ENCODE measurements at regions of chr7 and their contacts with region 1.

Region 1: DNA sequence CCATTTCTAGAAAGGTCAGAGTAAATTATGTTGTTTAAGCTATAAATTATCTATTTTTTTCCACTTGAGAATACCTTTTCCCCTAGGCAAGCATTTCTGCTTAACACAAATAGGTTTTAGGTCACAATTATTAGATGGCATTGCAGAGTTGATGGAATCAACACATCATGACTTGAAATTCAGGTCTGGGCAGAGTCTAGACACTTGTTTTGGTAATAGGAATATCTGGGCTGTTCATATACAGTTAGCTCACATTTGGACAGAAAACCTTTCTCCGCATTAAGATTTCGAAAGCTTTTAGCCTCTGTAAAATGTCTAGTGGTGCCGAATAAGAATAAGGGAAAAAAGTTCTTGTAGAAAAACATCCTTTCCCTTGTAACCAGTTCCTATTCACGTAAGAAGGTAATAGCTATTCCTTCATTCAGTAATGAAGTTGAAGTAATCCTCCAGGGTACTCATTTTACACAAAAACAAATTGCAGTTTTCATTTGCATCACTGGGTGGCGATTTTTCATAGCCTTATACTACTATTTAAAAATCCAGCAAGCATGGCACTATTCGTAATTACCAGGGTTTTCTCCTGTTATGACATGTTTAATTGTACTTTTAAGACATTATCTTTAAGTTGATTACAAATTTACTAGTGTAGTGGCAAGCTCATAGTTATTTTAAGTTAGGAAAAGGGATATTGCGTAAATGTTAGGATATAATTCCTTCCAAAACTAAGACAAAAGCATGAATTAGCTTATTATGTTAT is 37.0 kb downstream of the RPA3 start:
- DNase-seq: peak; percentile 12
- H3K4me3 ChIP-seq: no peak overlapping the region
- H3K27me3 ChIP-seq: no peaks in the 10 kb centered on the region
- CTCF ChIP-seq: peak; percentile 60

Region 2: GRCh38 chr7:7668706-7669105 is 12.7 kb before region 1 on chr7:
- CTCF ChIA-PET with region 1: no interaction called
- POLR2A ChIA-PET with region 1: no interaction called
- DNase-seq: no peak
- H3K4me3 ChIP-seq: no peak overlapping the region
- H3K27me3 ChIP-seq: no peaks in the 10 kb centered on the region
- CTCF ChIP-seq: no peak

Region 3: GRCh38 chr7:7696458-7697119 is 15.2 kb after region 1 on chr7:
- CTCF ChIA-PET with region 1: interaction called, 14 read pairs
- POLR2A ChIA-PET with region 1: no interaction called
- DNase-seq: no peak
- H3K4me3 ChIP-seq: no peak overlapping the region
- H3K27me3 ChIP-seq: no peaks in the 10 kb centered on the region
- CTCF ChIP-seq: no peak

Region 4: GRCh38 chr7:7761340-7761980 is 80.1 kb after region 1 on chr7:
- CTCF ChIA-PET with region 1: interaction called, 45 read pairs
- POLR2A ChIA-PET with region 1: no interaction called
- DNase-seq: peak; percentile 17
- H3K4me3 ChIP-seq: no peak overlapping the region
- H3K27me3 ChIP-seq: no peaks in the 10 kb centered on the region
- CTCF ChIP-seq: 0 out of 2 replicates have a peak, but pooled peaks have one; percentile 20

Region 5: DNA sequence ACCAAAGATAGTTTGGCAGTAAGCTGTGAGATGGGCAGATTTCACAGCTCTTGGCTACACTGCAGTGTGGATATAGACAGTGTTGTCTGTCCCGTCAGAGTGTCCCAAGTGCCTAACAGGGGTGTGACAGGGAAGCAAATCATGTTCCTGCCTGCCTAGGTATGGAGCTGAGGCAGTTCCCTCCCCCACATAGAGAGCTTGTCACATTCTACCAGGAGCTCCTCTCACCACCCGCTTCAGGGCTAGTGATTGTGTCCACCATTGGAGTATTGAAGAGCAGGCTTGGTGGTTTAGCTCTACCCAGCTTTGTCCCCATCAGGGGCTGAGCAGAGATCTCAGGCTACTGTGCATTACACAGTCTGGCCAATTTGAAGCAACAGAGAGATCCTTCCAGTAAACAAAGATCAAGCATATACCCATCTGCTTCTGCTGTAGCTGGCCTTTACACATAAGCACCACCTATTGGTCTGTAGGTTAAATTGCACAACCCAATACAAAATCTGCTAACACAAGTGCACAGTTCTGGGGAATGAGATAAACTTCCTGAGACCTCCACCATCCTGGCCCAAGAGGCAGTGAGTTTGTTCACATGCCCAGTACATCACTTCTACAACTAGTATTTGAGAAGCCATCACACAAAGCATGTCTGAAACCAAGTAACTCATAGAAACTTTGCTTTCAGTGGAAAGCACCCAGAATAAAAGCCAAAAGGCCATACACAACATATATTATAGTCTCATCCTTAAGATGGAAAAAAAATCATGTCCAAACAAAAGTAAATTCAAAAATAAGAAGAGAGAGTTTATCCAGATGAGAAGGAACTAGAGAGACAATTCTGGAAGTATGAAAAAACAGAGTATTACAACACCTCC is 354.5 kb after region 1 on chr7:
- CTCF ChIA-PET with region 1: interaction called, 10 read pairs
- POLR2A ChIA-PET with region 1: no interaction called
- DNase-seq: no peak
- H3K4me3 ChIP-seq: no peak overlapping the region
- H3K27me3 ChIP-seq: no peaks in the 10 kb centered on the region
- CTCF ChIP-seq: peak; percentile 63